A549 (cell line): ENCODE measurements at regions of chr9 and their contacts with region 1.

Region 1: DNA sequence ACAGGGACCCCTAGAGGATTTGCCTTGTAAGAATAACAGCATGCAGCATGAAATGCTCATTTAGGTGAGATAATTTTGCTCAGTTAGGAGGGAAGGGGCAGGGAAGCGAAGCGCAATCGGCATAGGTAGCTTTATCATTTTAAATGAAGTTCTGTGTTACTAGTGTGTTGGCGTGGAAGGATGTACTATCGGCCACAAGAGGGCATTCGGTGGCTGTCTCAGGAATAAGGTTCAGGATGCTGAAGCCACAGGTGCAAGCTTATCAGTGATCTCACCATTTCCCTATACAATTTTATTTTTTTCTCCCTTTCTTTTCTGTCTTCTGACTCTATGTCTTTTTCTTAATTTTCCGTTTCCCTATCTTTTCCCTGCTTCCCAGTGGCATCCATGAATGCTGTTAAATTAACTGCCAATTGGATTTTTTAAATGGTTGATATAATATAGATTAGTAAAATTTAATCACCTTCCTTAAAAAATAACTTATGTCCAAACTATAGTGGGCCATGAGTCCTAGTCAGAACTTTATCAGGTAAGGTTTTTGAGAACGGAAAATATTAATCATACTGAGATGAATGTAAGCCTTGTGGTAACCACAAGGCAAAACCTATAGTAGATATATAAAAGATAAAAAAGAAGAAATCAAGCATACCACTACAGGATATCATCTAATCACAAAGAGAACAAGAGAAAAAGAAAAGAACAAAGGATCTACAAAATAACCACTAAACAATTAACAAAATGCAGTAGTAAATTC is 1.2 kb upstream of the INSL6 start:
- DNase-seq: peak; percentile 65 to 78
- ATAC-seq: peak; percentile 90 to 97
- H3K4me3 ChIP-seq: no peak overlapping the region
- H3K27ac ChIP-seq: no peak overlapping the region
- H3K4me1 ChIP-seq: no peaks in the 10 kb centered on the region
- CTCF ChIP-seq: peak; percentile 96
- EP300 ChIP-seq: no peak
- POLR2A ChIP-seq: no peak
- RAD21 ChIP-seq: peak; percentile 96

Region 2: GRCh38 chr9:5263351-5264218 is 77.0 kb after region 1 on chr9:
- CTCF ChIA-PET with region 1: interaction called, 24 read pairs
- POLR2A ChIA-PET with region 1: no interaction called
- DNase-seq: peak; percentile 22 to 60
- ATAC-seq: peak; percentile 89 to 94
- H3K4me3 ChIP-seq: no peak overlapping the region
- H3K27ac ChIP-seq: no peak overlapping the region
- H3K4me1 ChIP-seq: peaks cover 2% of the 10 kb centered on the region; the same call in 1 of the 3 replicates
- CTCF ChIP-seq: peak; percentile 65
- EP300 ChIP-seq: no peak
- POLR2A ChIP-seq: no peak
- RAD21 ChIP-seq: peak; percentile 54 to 63

Region 3: DNA sequence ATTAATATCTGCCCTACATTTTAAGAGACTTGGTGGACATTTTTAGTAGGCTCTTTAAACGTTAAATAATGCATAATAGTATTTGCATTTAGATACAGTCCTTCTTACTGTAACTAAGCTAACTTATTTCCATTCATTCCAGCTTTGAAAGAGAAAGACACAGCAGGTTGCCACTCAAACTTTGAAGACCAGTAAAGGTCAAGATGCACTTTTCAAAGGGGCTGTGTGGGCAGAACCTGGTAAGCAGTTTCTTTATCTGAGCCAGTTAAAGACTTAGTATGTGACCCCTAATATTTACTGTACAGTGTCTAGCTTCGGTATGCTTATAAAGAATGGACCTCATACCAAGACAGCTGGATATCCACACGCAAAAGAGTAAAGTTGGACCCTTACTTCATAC is 230.4 kb after region 1 on chr9:
- CTCF ChIA-PET with region 1: interaction called, 21 read pairs
- POLR2A ChIA-PET with region 1: no interaction called
- DNase-seq: no peak
- ATAC-seq: no peak
- H3K4me3 ChIP-seq: no peak overlapping the region
- H3K27ac ChIP-seq: no peak overlapping the region
- H3K4me1 ChIP-seq: no peaks in the 10 kb centered on the region
- CTCF ChIP-seq: no peak
- EP300 ChIP-seq: no peak
- POLR2A ChIP-seq: no peak
- RAD21 ChIP-seq: no peak

Region 4: GRCh38 chr9:5437254-5438216 is 250.9 kb after region 1 on chr9 and contains the start of gene PLGRKT:
- CTCF ChIA-PET with region 1: interaction called, 114 read pairs
- POLR2A ChIA-PET with region 1: interaction called, 6 read pairs
- DNase-seq: peak; percentile 82 to 94
- ATAC-seq: peak; percentile 97 to 99
- H3K4me3 ChIP-seq: peak within 1 kb of the TSS; percentile 73
- H3K27ac ChIP-seq: peak within 1 kb of the TSS; percentile 87 to 91
- H3K4me1 ChIP-seq: peaks cover 18% of the 10 kb centered on the region
- CTCF ChIP-seq: no peak
- EP300 ChIP-seq: no peak
- POLR2A ChIP-seq: peak; percentile 94
- RAD21 ChIP-seq: no peak
- polyA plus RNA-seq, gene PLGRKT: 22.4 and 37.7 TPM in 2 replicates

Region 5: DNA sequence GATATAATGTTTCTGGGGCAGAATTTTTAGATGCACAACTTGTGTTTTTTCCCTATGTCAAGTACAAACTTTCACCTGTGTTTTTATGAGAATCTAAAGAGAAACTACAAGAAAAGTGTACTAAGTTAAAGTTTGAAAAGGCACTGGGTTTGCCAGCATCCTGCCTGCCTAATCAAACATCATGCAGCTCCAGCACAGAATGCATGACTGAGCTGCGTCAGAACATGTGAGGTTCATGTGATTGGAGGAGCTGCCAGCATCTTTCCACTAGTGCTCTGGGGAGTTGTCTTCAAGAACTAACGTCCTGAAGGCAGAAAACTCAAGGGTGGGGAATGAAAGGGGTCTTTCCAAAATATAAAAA is 396.2 kb after region 1 on chr9:
- CTCF ChIA-PET with region 1: interaction called, 59 read pairs
- POLR2A ChIA-PET with region 1: no interaction called
- DNase-seq: no peak
- ATAC-seq: peak; percentile 82 to 89
- H3K4me3 ChIP-seq: no peak overlapping the region
- H3K27ac ChIP-seq: 0 out of 6 replicates have a peak overlapping the region, but pooled peaks of 1 of the 2 experiments have one; percentile 3
- H3K4me1 ChIP-seq: peaks cover 8% of the 10 kb centered on the region; the same call in 2 of the 3 replicates
- CTCF ChIP-seq: no peak
- EP300 ChIP-seq: no peak
- POLR2A ChIP-seq: no peak
- RAD21 ChIP-seq: no peak